ENCODE measurements at regions of chr6 and their contacts with region 1.

Region 1: GRCh38 chr6:109382576-109383437 is 540 bp upstream of the CD164 start:
- DNase-seq: peak; percentile 99
- ATAC-seq: peak; percentile 71
- H3K4me3 ChIP-seq: peak overlapping the region; percentile 87 to 98 (median 90)
- H3K4me3 Mint-ChIP-seq: peak overlapping the region; percentile 94
- H3K27ac ChIP-seq: peak overlapping the region; percentile 94 to 97
- H3K27ac Mint-ChIP-seq: peak overlapping the region; percentile 100
- H3K4me1 ChIP-seq: peaks cover 40 to 41% of the 10 kb centered on the region in 2 donors
- H3K4me1 Mint-ChIP-seq: peaks cover 41% of the 10 kb centered on the region
- H3K27me3 ChIP-seq: no peaks in the 10 kb centered on the region
- H3K27me3 Mint-ChIP-seq: no peaks in the 10 kb centered on the region
- CTCF ChIP-seq: peak; percentile 79

Region 2: DNA sequence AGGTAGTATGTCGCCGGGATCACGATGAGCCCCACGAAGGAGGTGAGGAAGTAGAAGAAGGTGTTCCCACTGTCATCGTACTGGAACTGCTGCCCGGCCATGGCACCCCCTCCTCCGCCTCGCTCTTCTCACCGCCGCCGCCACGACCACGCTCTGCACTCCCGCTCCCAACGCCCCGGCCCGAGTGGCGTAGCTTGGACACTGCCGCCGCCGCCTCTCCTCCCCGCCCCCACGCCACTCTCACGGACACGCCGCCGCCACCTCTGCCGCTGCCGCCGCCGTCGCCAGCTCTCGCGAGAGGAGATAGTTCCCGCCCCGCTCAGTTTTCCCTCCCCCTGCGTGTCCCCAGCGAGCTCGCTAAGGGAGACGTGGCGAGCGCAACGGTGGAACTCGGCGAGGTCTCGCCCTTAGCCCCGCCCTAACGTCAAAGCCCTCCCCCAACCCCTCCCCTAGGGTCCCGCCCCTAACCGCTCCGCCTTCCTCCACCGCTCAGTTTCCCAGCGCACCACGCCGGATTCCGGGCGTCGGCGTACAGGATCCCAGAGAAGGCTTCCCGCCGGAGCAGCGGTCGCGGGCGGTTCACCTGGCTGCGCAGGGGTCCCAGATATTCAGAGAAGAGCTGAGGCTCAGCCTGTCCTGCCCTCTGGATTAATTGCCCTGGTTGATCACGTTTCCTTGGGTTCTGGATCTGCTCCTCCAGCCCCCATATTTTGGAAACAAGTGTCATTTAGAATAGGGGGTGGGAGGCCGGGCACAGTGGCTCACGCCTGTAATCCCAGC is 1424.7 kb before region 1 on chr6 and contains the start of gene SEC63:
- CTCF ChIA-PET with region 1: no interaction called
- POLR2A ChIA-PET with region 1: no interaction called
- intact Hi-C with region 1: loop called (anchors 2 kb)
- DNase-seq: peak; percentile 96
- ATAC-seq: peak; percentile 97
- H3K4me3 ChIP-seq: peak within 1 kb of the TSS; percentile 71 to 96 (median 77)
- H3K4me3 Mint-ChIP-seq: peak within 1 kb of the TSS; percentile 94
- H3K27ac ChIP-seq: peak within 1 kb of the TSS; percentile 60 to 73
- H3K27ac Mint-ChIP-seq: peak within 1 kb of the TSS; percentile 94
- H3K4me1 ChIP-seq: peaks cover 12 to 21% of the 10 kb centered on the region in 2 donors
- H3K4me1 Mint-ChIP-seq: peaks cover 27% of the 10 kb centered on the region
- H3K27me3 ChIP-seq: no peaks in the 10 kb centered on the region
- H3K27me3 Mint-ChIP-seq: no peaks in the 10 kb centered on the region
- CTCF ChIP-seq: no peak
- total RNA-seq, gene SEC63: 74.2 and 79.5 TPM in 2 replicates

Region 3: GRCh38 chr6:108848116-108848868 is 534.5 kb before region 1 on chr6 and contains the start of gene ARMC2:
- CTCF ChIA-PET with region 1: no interaction called
- POLR2A ChIA-PET with region 1: no interaction called
- intact Hi-C with region 1: loop called (anchors 2 kb)
- DNase-seq: peak; percentile 95
- ATAC-seq: peak; percentile 93
- H3K4me3 ChIP-seq: peak within 1 kb of the TSS; percentile 53 to 85 (median 78)
- H3K4me3 Mint-ChIP-seq: peak within 1 kb of the TSS; percentile 93
- H3K27ac ChIP-seq: peak within 1 kb of the TSS; percentile 48 to 77
- H3K27ac Mint-ChIP-seq: peak within 1 kb of the TSS; percentile 94
- H3K4me1 ChIP-seq: peaks cover 9 to 12% of the 10 kb centered on the region in 2 donors
- H3K4me1 Mint-ChIP-seq: peaks cover 13% of the 10 kb centered on the region
- H3K27me3 ChIP-seq: peaks cover 0 to 2% (median 0%) of the 10 kb centered on the region in 4 experiments
- H3K27me3 Mint-ChIP-seq: no peaks in the 10 kb centered on the region
- CTCF ChIP-seq: no peak
- total RNA-seq, gene ARMC2: 4.9 and 9.9 TPM in 2 replicates

Region 4: DNA sequence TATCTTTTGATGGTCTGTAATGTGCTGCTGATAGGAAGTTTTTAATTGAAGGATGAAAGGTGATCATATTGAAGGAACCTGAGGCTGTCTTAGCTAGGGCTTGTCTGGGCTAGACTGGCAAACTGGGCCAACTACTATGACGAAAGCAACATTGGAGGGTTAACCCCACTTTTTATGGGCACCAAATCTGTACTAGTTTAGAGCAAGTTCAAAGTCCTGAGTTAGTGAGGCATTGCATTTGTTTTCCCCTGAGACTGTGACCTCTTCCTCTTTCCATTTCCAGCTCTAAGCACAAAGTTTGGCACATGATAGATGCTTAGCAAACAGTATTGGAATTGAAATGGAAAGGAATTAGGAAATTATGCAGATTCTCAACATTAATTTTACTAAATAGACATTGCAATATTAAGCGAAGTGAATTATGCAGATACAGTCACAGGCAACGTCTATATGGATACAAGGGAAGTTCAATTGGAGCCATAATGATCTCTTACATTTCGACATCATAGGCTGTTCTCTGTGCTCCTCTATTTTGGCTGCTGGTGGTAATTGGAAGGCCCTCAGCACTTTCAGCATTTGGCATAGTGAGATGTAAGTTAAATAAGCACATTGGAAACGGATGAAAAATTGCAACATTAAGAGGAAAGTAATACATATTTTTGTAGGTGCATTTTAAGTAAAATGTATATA is 265.3 kb before region 1 on chr6:
- CTCF ChIA-PET with region 1: no interaction called
- POLR2A ChIA-PET with region 1: no interaction called
- intact Hi-C with region 1: loop called (anchors 1 kb)
- DNase-seq: peak; percentile 88
- ATAC-seq: peak; percentile 96
- H3K4me3 ChIP-seq: no peak overlapping the region
- H3K4me3 Mint-ChIP-seq: peak overlapping the region; percentile 26
- H3K27ac ChIP-seq: peak overlapping the region; percentile 11 to 52
- H3K27ac Mint-ChIP-seq: peak overlapping the region; percentile 39
- H3K4me1 ChIP-seq: peaks cover 25 to 41% of the 10 kb centered on the region in 2 donors
- H3K4me1 Mint-ChIP-seq: peaks cover 44% of the 10 kb centered on the region
- H3K27me3 ChIP-seq: no peaks in the 10 kb centered on the region
- H3K27me3 Mint-ChIP-seq: no peaks in the 10 kb centered on the region
- CTCF ChIP-seq: no peak

Region 5: GRCh38 chr6:109440331-109441068 is 57.7 kb after region 1 on chr6 and contains the starts of genes PPIL6 and SMPD2:
- CTCF ChIA-PET with region 1: interaction called, 29 read pairs
- POLR2A ChIA-PET with region 1: interaction called, 18 read pairs
- intact Hi-C with region 1: loop called (anchors 1 kb)
- DNase-seq: peak; percentile 94
- ATAC-seq: peak; percentile 87
- H3K4me3 ChIP-seq: peak within 1 kb of the TSS; percentile 0 to 93 (median 90)
- H3K4me3 Mint-ChIP-seq: peak within 1 kb of the TSS; percentile 97
- H3K27ac ChIP-seq: peak within 1 kb of the TSS; percentile 79 to 98
- H3K27ac Mint-ChIP-seq: peak within 1 kb of the TSS; percentile 96
- H3K4me1 ChIP-seq: peaks cover 21 to 30% of the 10 kb centered on the region in 2 donors
- H3K4me1 Mint-ChIP-seq: peaks cover 31% of the 10 kb centered on the region
- H3K27me3 ChIP-seq: no peaks in the 10 kb centered on the region
- H3K27me3 Mint-ChIP-seq: no peaks in the 10 kb centered on the region
- CTCF ChIP-seq: no peak
- total RNA-seq, gene PPIL6: 0.53 and 1.8 TPM in 2 replicates
- total RNA-seq, gene SMPD2: 35.7 and 36.4 TPM in 2 replicates

Region 6: DNA sequence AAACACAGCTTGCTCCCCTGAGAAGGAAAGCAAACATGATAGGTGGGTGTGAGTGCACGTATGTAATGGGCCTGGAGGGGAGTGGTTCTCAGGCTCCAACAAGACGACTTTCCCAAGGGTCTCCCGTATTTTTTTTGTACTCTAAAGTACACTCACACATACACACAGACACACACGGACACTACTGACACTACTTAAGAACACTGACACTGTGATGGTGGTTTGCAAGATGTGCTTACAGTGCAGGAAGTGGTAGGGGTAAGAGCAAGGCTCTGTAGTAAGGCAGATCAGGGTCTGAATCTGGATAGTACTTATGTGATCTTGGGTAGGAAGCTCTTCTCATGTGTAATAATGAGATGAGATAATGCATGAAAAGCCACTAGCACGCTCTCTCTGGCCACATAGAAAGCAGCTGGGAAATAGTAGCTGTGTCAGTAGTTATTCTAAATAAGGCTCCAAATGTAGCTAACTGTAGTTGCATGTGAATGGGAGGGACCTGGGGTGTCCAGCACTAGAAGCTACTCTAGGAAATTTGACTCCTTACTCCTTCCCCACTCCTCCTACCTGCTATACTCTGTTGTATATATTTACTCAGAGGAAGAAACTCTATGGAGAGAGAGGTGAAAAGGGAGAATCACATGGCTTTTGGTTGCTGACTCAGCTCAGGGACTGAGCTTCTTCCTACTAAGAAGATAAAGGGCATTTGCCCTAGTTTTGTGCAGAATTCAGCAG is 108.6 kb after region 1 on chr6:
- CTCF ChIA-PET with region 1: interaction called, 3 read pairs
- POLR2A ChIA-PET with region 1: interaction called, 12 read pairs
- intact Hi-C with region 1: no loop called
- DNase-seq: no peak
- ATAC-seq: no peak
- H3K4me3 ChIP-seq: no peak overlapping the region
- H3K4me3 Mint-ChIP-seq: no peak overlapping the region
- H3K27ac ChIP-seq: no peak overlapping the region
- H3K27ac Mint-ChIP-seq: peak overlapping the region; percentile 67
- H3K4me1 ChIP-seq: peaks cover 8 to 14% of the 10 kb centered on the region in 2 donors
- H3K4me1 Mint-ChIP-seq: peaks cover 22% of the 10 kb centered on the region
- H3K27me3 ChIP-seq: no peaks in the 10 kb centered on the region
- H3K27me3 Mint-ChIP-seq: no peaks in the 10 kb centered on the region
- CTCF ChIP-seq: no peak

Region 7: GRCh38 chr6:110415086-110415916 is 1032.5 kb after region 1 on chr6 and contains the start of gene DDO:
- CTCF ChIA-PET with region 1: no interaction called
- POLR2A ChIA-PET with region 1: no interaction called
- intact Hi-C with region 1: no loop called
- DNase-seq: no peak
- ATAC-seq: no peak
- H3K4me3 ChIP-seq: no peak within 1 kb of the TSS
- H3K4me3 Mint-ChIP-seq: peak within 1 kb of the TSS; percentile 44
- H3K27ac ChIP-seq: no peak within 1 kb of the TSS
- H3K27ac Mint-ChIP-seq: no peak within 1 kb of the TSS
- H3K4me1 ChIP-seq: no peaks in the 10 kb centered on the region
- H3K4me1 Mint-ChIP-seq: peaks cover 4% of the 10 kb centered on the region
- H3K27me3 ChIP-seq: no peaks in the 10 kb centered on the region
- H3K27me3 Mint-ChIP-seq: peaks cover 28% of the 10 kb centered on the region
- CTCF ChIP-seq: no peak
- total RNA-seq, gene DDO: not detected in 2 replicates